ENCODE measurements at regions of chr4 and their contacts with region 1.

Region 1: GRCh38 chr4:176340871-176341685 is 21.3 kb downstream of the SPCS3 start:
- DNase-seq: no peak
- ATAC-seq: peak; percentile 89
- H3K4me3 ChIP-seq: no peak overlapping the region
- H3K27ac ChIP-seq: no peak overlapping the region
- H3K4me1 ChIP-seq: no peaks in the 10 kb centered on the region
- H3K27me3 ChIP-seq: no peaks in the 10 kb centered on the region

Region 2: GRCh38 chr4:175947117-175947722 is 393.9 kb before region 1 on chr4:
- intact Hi-C with region 1: loop called in 1 of 2 experiments (anchors 10 kb)
- DNase-seq: no peak
- ATAC-seq: no peak
- H3K4me3 ChIP-seq: no peak overlapping the region
- H3K27ac ChIP-seq: no peak overlapping the region
- H3K4me1 ChIP-seq: no peaks in the 10 kb centered on the region
- H3K27me3 ChIP-seq: no peaks in the 10 kb centered on the region

Region 3: GRCh38 chr4:176034499-176034898 is 306.6 kb before region 1 on chr4:
- intact Hi-C with region 1: loop called (anchors 2 kb)
- DNase-seq: no peak
- ATAC-seq: no peak
- H3K4me3 ChIP-seq: no peak overlapping the region
- H3K27ac ChIP-seq: no peak overlapping the region
- H3K4me1 ChIP-seq: no peaks in the 10 kb centered on the region
- H3K27me3 ChIP-seq: no peaks in the 10 kb centered on the region

Region 4: DNA sequence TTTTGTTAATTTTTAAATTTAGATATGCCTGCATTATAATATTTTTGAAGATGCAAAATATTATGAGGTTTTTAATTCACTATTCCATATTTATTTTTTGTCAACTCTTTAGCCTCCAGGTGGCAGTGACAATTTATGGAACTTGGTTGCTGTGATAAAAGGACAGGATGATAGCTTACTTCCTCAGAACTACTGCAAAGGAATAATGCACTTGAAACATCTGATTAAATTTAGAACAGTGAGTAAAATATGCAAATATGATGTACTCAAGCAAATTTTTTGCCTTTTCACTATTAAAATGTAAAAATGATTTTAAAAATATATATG is 190.8 kb before region 1 on chr4:
- intact Hi-C with region 1: loop called (anchors 2 kb)
- DNase-seq: no peak
- ATAC-seq: no peak
- H3K4me3 ChIP-seq: no peak overlapping the region
- H3K27ac ChIP-seq: no peak overlapping the region
- H3K4me1 ChIP-seq: no peaks in the 10 kb centered on the region
- H3K27me3 ChIP-seq: no peaks in the 10 kb centered on the region

Region 5: DNA sequence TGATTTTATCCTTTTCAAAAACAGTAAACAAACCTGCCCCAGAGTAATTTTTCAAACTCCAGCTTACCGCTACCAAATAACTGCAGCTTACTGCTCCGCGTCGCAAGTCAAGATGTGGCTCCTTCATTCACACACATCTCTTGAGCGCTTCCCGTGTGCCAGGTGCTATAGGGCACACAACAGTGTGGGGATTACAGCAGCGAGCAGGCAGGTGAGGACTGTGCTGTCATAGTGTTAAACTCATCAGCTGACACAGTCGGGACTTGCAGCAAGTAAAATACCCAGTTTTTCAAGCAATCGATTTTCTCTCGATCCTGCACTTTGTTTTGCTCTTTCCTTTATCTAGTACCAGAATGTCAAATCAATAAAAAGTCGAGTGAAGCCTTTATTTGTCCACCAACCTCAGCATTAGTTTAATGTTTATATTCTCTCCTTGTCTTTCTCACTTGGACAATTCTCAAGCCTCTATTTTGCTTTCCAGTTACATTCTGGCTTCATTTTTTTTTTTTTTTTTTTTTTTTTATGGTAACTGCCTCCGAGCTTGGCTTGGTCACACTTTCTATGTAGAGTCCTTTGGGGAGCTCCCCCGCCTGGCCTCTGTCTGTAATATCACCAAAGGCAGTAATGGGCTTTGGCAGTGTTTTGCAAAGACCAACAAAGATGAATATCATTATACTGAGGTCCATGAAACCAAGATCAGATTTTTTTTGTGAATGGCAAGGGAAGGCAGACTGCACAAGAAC is 63.7 kb before region 1 on chr4:
- intact Hi-C with region 1: loop called (anchors 5 to 10 kb)
- DNase-seq: peak; percentile 59 to 87
- ATAC-seq: peak; percentile 80
- H3K4me3 ChIP-seq: peak overlapping the region in 1 of 2 donors; percentile 41
- H3K27ac ChIP-seq: no peak overlapping the region
- H3K4me1 ChIP-seq: peaks cover 0 to 3% of the 10 kb centered on the region in 2 donors
- H3K27me3 ChIP-seq: no peaks in the 10 kb centered on the region

Region 6: DNA sequence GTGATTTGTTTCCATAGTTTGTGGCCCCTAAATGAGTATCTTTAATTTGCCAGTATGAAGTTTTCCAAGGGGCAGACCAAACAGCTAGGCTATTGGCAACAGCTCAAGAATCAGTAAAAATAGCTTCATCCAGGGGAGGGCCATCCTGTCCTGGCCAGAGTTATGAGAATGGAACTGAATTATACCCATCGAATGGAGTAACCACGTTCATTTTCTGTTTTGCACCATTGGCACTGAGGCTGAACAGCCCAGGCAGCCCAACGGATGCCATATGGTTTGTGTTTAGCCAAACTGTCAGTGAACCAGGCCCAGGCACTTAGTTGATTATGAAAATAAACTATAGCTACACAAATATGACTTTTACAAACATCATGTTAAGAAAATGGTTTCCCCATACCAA is 54.4 kb before region 1 on chr4:
- intact Hi-C with region 1: loop called in 1 of 2 experiments (anchors 10 kb)
- DNase-seq: no peak
- ATAC-seq: no peak
- H3K4me3 ChIP-seq: no peak overlapping the region
- H3K27ac ChIP-seq: no peak overlapping the region
- H3K4me1 ChIP-seq: peaks cover 0 to 2% of the 10 kb centered on the region in 2 donors
- H3K27me3 ChIP-seq: no peaks in the 10 kb centered on the region

Region 7: GRCh38 chr4:176302283-176303275 is 38.5 kb before region 1 on chr4:
- intact Hi-C with region 1: no loop called
- DNase-seq: no peak
- ATAC-seq: no peak
- H3K4me3 ChIP-seq: no peak overlapping the region
- H3K27ac ChIP-seq: no peak overlapping the region
- H3K4me1 ChIP-seq: no peaks in the 10 kb centered on the region
- H3K27me3 ChIP-seq: no peaks in the 10 kb centered on the region

Measured in aorta (tissue), 5 donors.